ENCODE measurements at regions of chr14 and their contacts with region 1.

Region 1: GRCh38 chr14:71320107-71320733 is 413.0 kb downstream of the PCNX1 start:
- DNase-seq: peak; percentile 90 to 99 (median 97)

Region 2: GRCh38 chr14:71138448-71139293 is 181.5 kb before region 1 on chr14:
- intact Hi-C with region 1: loop called (anchors 10 kb)
- DNase-seq: peak; percentile 37 to 85 (median 66)

Region 3: DNA sequence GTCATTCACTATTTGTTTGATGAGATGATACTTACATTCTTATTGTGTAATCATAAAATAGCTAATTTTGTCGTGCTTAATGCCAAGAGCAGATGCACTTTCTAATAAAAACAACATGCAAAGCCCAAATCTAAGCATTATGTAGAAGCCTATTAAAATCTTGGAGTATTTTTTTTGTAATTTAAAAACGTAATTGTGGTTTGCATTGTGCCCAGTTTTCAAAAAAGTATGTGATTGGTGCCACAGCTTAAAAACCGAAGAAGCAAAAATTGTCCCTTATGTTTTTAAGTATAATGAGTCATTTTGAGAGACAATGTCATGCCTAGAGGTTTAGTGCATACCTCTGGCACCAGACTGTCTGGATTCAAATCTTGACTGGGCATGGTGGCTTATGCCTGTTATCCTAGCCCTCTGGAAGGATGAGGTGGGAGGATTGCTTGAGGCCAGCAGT is 147.2 kb after region 1 on chr14:
- intact Hi-C with region 1: loop called (anchors 10 kb)
- DNase-seq: no peak

Region 4: GRCh38 chr14:71591929-71592328 is 271.7 kb after region 1 on chr14:
- intact Hi-C with region 1: loop called (anchors 10 kb)
- DNase-seq: no peak

Region 5: DNA sequence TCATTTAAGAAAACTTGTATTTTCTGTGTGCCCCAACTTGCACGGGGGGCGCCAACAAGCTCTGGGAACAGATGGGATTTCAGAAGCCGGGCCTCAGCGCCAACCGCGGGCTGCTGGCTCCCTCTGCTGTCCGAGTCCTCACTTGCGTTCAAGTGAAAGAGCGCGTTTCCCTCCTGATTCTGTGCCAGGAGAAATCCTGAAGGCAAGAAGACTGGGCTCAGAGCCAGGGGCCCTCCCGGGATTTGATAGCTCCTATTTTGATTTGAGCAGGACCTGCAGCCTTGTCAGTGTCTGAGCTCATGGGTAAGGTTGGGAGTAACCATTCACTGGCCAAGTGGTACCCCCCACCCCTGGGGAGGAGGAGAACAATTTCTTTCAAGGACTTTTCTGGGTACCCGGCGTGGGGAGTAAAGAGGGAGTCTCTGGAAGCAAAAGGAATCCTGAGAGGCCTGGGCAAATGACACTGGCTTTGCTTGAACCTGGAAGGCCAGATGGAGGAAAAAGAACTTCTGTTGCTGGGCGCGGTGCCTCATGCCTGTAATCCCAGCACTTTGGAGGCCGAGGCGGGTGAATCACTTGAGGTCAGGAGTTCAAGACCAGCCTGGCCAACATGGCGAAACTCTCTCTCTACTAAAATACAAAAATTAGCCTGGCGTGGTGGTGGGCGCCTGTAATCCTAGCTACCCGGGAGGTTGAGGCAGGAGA is 433.1 kb after region 1 on chr14:
- intact Hi-C with region 1: loop called (anchors 10 kb)
- DNase-seq: peak; percentile 77 to 94 (median 88)